IMR-90 (cell line): ENCODE measurements at regions of chr9 and their contacts with region 1.

Region 1: DNA sequence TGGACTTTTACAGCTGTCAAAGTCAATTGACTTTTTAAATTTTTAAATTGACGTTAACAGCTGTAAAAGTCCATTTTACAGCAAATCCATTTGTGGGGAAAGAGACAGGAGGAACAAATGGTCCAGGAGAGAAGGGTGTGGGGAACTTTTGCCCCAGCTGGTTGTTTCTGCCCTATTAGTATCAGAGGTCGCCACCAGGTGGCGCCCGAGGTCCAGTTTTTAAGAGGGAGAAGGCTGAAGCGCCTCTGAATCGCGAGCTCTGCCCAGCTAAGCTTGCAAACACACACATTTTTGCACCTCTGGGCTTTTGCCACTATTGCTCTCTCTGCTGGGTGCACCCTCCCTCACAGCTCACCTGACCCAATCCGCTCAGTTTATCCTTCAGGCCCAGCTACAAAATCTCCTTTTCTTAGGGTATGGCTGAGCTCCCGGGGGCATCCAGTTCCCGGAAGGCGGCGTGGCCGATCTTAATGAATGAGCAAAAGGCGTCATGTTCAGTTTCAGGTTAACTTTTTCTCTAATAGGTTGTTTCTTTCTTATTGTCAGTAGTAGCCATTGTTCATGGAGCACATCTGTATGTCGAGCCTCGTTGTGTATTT is 6.3 kb upstream of the TTLL11 start:
- DNase-seq: peak; percentile 74
- ATAC-seq: peak; percentile 89
- H3K4me3 ChIP-seq: no peak overlapping the region
- H3K27ac ChIP-seq: no peak overlapping the region
- H3K4me1 ChIP-seq: no peaks in the 10 kb centered on the region; the same call in 1 of the 2 replicates
- H3K27me3 ChIP-seq: peaks cover 3% of the 10 kb centered on the region
- CTCF ChIP-seq: peak; percentile 86
- POLR2A ChIP-seq: no peak
- RAD21 ChIP-seq: peak; percentile 82

Region 2: DNA sequence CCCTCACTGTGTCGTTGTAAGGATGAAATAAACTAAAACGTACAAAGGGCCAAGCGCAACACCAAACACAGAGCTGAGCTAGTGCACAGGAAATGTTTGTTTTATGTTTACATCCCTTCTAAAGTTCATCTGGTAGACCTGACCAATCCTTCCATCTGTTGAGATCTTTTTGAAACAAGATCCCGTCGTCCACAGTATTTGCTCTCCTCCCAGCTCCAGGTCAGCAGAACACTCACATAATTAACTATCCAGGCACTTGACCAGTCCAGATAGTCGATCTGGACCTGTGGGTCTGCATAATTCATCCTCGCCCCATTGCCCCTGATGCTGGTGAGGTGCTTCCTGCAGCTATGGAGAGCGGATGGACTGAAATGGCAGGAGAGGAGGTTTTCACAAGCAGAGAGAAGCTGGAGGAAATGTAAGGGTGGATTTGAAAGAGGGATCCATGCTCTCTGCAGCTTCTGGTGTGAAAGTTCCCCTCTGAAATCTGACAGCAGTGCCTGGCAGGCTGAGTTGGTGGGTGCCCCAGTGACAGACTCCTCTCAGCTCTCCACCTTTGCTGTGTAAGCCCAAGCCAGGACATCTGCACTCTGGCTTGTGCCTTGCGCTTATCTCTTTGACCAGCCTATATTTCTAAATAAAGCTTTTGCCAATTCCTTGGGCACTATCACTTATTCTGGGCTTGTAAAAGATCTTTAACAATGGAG is 108.6 kb before region 1 on chr9:
- CTCF ChIA-PET with region 1: no interaction called
- POLR2A ChIA-PET with region 1: no interaction called
- dilution Hi-C with region 1: no loop called
- in situ Hi-C with region 1: no loop called
- intact Hi-C with region 1: no loop called
- DNase-seq: no peak
- ATAC-seq: no peak
- H3K4me3 ChIP-seq: no peak overlapping the region
- H3K27ac ChIP-seq: no peak overlapping the region
- H3K4me1 ChIP-seq: peaks cover 5% of the 10 kb centered on the region; the same call in 1 of the 2 replicates
- H3K27me3 ChIP-seq: no peaks in the 10 kb centered on the region
- CTCF ChIP-seq: no peak
- POLR2A ChIP-seq: no peak
- RAD21 ChIP-seq: no peak

Region 3: DNA sequence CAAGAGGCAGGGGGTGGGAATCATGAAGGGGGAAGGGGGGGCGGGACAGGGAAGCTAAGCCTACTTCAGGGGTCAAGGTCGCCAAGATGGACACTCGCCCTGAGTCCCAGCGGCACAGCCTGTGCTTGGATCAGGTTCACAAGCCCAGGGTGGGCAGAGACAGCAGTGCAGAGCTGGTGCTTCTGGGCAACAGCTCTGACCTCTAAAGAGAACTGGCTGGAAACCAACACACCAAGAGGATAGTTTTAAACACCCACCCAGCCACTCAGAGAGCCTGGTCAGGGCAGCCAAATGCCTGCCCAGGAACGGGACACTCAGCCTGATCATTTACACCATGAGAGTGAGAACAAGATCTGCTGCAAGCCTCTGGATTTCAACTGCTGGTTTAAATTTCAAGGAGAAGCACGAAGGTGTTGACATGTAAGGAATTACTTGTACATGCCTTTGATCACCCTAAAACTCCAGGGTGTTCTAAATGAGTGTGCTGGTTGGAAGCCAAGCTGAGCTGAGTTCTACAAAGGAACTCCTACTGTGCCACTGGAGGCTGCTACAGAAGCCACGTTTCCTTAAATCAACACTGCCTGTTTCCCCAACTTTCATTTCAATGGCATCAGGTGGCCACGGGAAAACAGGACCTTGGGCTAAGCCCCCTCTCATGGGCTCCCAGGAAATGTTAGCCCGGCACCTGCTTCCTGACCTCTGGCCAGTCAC is 97.7 kb before region 1 on chr9:
- CTCF ChIA-PET with region 1: no interaction called
- POLR2A ChIA-PET with region 1: no interaction called
- dilution Hi-C with region 1: no loop called
- in situ Hi-C with region 1: no loop called
- intact Hi-C with region 1: loop called (anchors 5 kb)
- DNase-seq: peak; percentile 24
- ATAC-seq: peak; percentile 24
- H3K4me3 ChIP-seq: no peak overlapping the region
- H3K27ac ChIP-seq: no peak overlapping the region
- H3K4me1 ChIP-seq: peaks cover 12% of the 10 kb centered on the region
- H3K27me3 ChIP-seq: no peaks in the 10 kb centered on the region
- CTCF ChIP-seq: no peak
- POLR2A ChIP-seq: no peak
- RAD21 ChIP-seq: no peak

Region 4: GRCh38 chr9:122125158-122125508 is 25.8 kb after region 1 on chr9:
- CTCF ChIA-PET with region 1: interaction called, 37 read pairs
- POLR2A ChIA-PET with region 1: no interaction called
- dilution Hi-C with region 1: no loop called
- in situ Hi-C with region 1: no loop called
- intact Hi-C with region 1: loop called (anchors 1 kb)
- DNase-seq: peak; percentile 76
- ATAC-seq: peak; percentile 79
- H3K4me3 ChIP-seq: no peak overlapping the region
- H3K27ac ChIP-seq: no peak overlapping the region
- H3K4me1 ChIP-seq: peaks cover 13% of the 10 kb centered on the region
- H3K27me3 ChIP-seq: no peaks in the 10 kb centered on the region; the same call in 1 of the 2 replicates
- CTCF ChIP-seq: peak; percentile 99
- POLR2A ChIP-seq: peak; percentile 70; the same call in 1 of the 2 replicates
- RAD21 ChIP-seq: peak; percentile 99